ENCODE measurements at regions of chr13 and their contacts with region 1.

Region 1: GRCh38 chr13:29508130-29508875 is 87.2 kb downstream of the SLC7A1 start:
- DNase-seq: peak; percentile 90
- ATAC-seq: peak; percentile 80
- H3K4me3 Mint-ChIP-seq: no peak overlapping the region
- H3K27ac Mint-ChIP-seq: no peak overlapping the region
- H3K4me1 Mint-ChIP-seq: peaks cover 8% of the 10 kb centered on the region; the same call in 1 of the 2 replicates
- H3K27me3 Mint-ChIP-seq: no peaks in the 10 kb centered on the region
- CTCF ChIP-seq: peak; percentile 88

Region 2: DNA sequence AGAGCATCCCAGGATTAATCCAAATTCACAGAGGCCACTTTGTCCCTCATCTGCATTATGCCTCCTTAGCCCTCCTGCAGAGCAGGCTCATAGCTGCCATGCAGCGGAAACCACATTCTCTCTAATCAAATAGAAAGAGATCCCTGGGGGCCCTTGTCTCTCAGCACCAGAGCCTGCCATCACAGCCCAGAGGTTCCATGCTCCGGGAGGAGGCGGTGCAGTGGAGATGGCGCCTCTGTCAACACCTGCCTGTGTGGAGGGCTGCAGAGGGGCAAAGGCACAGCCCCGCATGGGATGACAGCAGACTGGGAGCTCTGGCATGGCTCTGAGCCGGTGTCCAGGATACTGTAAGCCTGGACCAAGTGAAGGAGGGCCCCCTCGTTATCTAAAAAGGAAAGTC is 24.1 kb before region 1 on chr13:
- CTCF ChIA-PET with region 1: interaction called, 10 read pairs
- POLR2A ChIA-PET with region 1: no interaction called
- DNase-seq: no peak
- ATAC-seq: peak; percentile 49
- H3K4me3 Mint-ChIP-seq: no peak overlapping the region
- H3K27ac Mint-ChIP-seq: no peak overlapping the region
- H3K4me1 Mint-ChIP-seq: peaks cover 44% of the 10 kb centered on the region
- H3K27me3 Mint-ChIP-seq: no peaks in the 10 kb centered on the region
- CTCF ChIP-seq: no peak

Region 3: GRCh38 chr13:29520671-29521070 is 12.4 kb after region 1 on chr13:
- CTCF ChIA-PET with region 1: interaction called, 19 read pairs
- POLR2A ChIA-PET with region 1: interaction called, 3 read pairs
- DNase-seq: no peak
- ATAC-seq: no peak
- H3K4me3 Mint-ChIP-seq: no peak overlapping the region
- H3K27ac Mint-ChIP-seq: no peak overlapping the region
- H3K4me1 Mint-ChIP-seq: peaks cover 5% of the 10 kb centered on the region; the same call in 1 of the 2 replicates
- H3K27me3 Mint-ChIP-seq: no peaks in the 10 kb centered on the region
- CTCF ChIP-seq: no peak

Region 4: GRCh38 chr13:29564818-29565217 is 56.5 kb after region 1 on chr13:
- CTCF ChIA-PET with region 1: interaction called, 11 read pairs
- POLR2A ChIA-PET with region 1: no interaction called
- DNase-seq: no peak
- ATAC-seq: no peak
- H3K4me3 Mint-ChIP-seq: no peak overlapping the region
- H3K27ac Mint-ChIP-seq: no peak overlapping the region
- H3K4me1 Mint-ChIP-seq: peaks cover 80% of the 10 kb centered on the region
- H3K27me3 Mint-ChIP-seq: no peaks in the 10 kb centered on the region
- CTCF ChIP-seq: no peak

Region 5: GRCh38 chr13:29702912-29703351 is 194.6 kb after region 1 on chr13:
- CTCF ChIA-PET with region 1: interaction called, 66 read pairs
- POLR2A ChIA-PET with region 1: no interaction called
- DNase-seq: no peak
- ATAC-seq: peak; percentile 16; the same call in 1 of the 2 replicates
- H3K4me3 Mint-ChIP-seq: no peak overlapping the region
- H3K27ac Mint-ChIP-seq: no peak overlapping the region
- H3K4me1 Mint-ChIP-seq: peaks cover 9% of the 10 kb centered on the region
- H3K27me3 Mint-ChIP-seq: no peaks in the 10 kb centered on the region; the same call in 1 of the 2 replicates
- CTCF ChIP-seq: no peak

Region 6: GRCh38 chr13:29713839-29714238 is 205.5 kb after region 1 on chr13:
- CTCF ChIA-PET with region 1: interaction called, 66 read pairs
- POLR2A ChIA-PET with region 1: no interaction called
- DNase-seq: no peak
- ATAC-seq: peak; percentile 67
- H3K4me3 Mint-ChIP-seq: no peak overlapping the region
- H3K27ac Mint-ChIP-seq: no peak overlapping the region
- H3K4me1 Mint-ChIP-seq: peaks cover 6% of the 10 kb centered on the region
- H3K27me3 Mint-ChIP-seq: no peaks in the 10 kb centered on the region
- CTCF ChIP-seq: peak; percentile 81

Region 7: DNA sequence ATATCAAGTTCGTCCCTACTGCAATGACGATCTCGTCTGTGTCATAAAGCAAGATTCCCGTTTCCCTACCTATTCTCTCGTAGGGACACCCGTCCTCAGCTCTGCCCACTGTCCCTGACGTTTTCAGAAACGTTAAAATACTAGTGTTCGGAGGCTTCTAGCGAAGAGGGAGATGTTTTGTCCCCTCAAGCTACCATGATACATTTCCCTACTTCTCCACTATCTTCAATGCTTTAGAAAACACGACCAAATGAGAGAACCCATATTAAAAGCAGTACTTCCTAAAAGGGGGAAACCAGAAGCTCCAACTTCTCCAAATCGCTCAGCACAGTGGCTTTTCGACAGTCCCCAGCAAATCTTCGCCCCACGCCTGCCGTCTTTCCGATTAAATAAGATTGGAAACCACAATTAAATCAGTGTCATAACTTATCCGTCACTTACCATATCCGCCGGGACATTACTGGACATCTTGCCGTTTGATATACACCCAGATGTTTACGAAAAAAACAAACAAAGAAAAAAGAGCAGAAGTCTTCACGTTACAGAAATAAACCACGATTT is 340.8 kb after region 1 on chr13:
- CTCF ChIA-PET with region 1: no interaction called
- POLR2A ChIA-PET with region 1: no interaction called
- DNase-seq: no peak
- ATAC-seq: no peak
- H3K4me3 Mint-ChIP-seq: peak overlapping the region; percentile 91
- H3K27ac Mint-ChIP-seq: peak overlapping the region; percentile 43
- H3K4me1 Mint-ChIP-seq: peaks cover 36% of the 10 kb centered on the region
- H3K27me3 Mint-ChIP-seq: no peaks in the 10 kb centered on the region; the same call in 1 of the 2 replicates
- CTCF ChIP-seq: no peak

Measured in WTC11 (cell line).